PC-3 (cell line): ENCODE measurements at regions of chr19 and their contacts with region 1.

Region 1: DNA sequence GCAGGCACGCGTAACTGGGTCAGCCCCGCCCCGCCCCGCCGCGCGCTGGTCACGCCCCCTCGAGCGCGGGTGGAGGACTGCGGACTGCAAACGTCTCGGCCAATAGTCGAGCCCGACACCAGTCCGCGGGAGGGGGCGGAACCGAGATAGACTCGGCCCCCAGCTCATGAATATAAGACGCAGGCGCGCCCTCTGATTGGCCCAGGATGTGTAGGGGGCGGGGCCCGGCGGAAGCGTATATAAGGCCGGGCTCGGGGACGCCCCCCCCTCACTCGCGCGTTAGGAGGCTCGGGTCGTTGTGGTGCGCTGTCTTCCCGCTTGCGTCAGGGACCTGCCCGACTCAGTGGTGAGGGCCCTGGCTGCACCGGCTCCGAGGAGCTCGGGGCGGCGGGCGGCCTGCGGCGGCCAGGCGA is at the start of gene CIRBP:
- DNase-seq: peak; percentile 95
- ATAC-seq: peak; percentile 35
- H3K4me3 ChIP-seq: peak within 1 kb of the TSS; percentile 71
- H3K27ac ChIP-seq: peak within 1 kb of the TSS; percentile 94
- H3K4me1 ChIP-seq: peaks cover 70% of the 10 kb centered on the region
- H3K27me3 ChIP-seq: no peaks in the 10 kb centered on the region
- CTCF ChIP-seq: no peak
- total RNA-seq, gene CIRBP: 136 and 197 TPM in 2 replicates

Region 2: DNA sequence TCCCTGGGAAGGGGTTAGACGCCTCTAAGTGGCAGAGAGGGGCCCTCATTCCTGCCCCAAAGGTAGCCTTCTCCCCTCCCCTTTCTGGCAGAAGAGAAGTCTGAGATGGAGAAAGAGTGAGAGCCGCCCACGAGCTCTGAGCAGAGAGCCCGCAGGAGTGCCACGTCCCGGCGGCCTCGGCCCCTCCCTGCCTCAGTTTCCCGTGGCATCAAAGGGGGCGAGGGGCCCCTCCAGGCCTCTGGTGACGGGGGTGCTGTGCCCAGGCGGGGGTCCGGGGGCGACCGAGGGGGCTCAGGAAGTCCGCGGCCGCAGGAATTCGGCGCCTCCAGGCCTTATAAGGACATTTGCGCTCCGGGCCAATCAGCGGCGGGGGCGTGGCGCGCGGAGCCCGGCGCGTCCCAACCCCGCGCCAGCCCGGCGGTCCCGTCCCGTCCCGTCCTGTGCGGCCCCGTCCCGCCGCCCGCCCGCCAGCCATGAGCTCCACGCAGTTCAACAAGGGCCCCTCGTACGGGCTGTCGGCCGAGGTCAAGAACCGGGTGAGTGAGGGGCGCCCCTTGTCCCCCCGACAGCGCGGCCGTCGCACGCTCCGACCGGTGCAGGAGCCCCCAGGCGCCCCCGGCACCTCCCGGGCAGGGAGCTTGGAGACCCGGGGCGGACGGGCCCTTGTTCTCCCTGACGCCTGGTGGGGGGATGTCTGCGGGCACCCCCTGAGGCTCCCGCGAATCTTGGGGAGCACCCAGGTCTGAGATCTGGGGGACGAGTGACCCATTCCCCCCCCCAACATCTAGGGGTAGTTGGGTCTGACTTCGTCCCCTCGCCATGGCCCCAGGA is 242.7 kb before region 1 on chr19 and contains the start of gene CNN2:
- CTCF ChIA-PET with region 1: no interaction called
- POLR2A ChIA-PET with region 1: interaction called, 15 read pairs
- intact Hi-C with region 1: no loop called
- DNase-seq: peak; percentile 66
- ATAC-seq: peak; percentile 76
- H3K4me3 ChIP-seq: peak within 1 kb of the TSS; percentile 95
- H3K27ac ChIP-seq: no peak within 1 kb of the TSS
- H3K4me1 ChIP-seq: no peaks in the 10 kb centered on the region; the same call in 1 of the 2 replicates
- H3K27me3 ChIP-seq: no peaks in the 10 kb centered on the region
- CTCF ChIP-seq: no peak
- total RNA-seq, gene CNN2: 97.9 and 107 TPM in 2 replicates

Region 3: DNA sequence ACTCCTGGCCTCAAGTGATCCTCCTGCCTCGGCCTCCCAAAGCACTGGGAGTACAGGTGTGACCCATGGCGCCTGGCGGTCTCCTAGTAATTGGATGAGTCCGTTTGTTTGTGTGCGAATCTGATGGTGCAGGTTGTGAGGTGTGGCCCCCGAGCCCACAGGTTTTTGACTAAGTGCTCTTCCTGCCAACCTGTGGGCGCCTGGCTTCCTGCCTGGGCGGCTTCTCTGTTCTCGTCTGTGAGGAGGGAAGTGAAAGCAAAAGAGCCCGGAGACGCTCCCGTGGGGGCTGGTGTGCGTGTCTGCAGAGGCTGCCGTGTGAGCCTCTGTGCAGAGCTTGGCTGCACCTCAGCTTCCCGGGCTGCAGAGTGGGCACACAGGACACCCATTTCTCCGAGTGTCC is 192.1 kb before region 1 on chr19:
- CTCF ChIA-PET with region 1: no interaction called
- POLR2A ChIA-PET with region 1: interaction called, 24 read pairs
- intact Hi-C with region 1: no loop called
- DNase-seq: peak; percentile 77
- ATAC-seq: peak; percentile 48
- H3K4me3 ChIP-seq: peak overlapping the region; percentile 48; the same call in 1 of the 2 replicates
- H3K27ac ChIP-seq: no peak overlapping the region
- H3K4me1 ChIP-seq: no peaks in the 10 kb centered on the region; the same call in 1 of the 2 replicates
- H3K27me3 ChIP-seq: no peaks in the 10 kb centered on the region
- CTCF ChIP-seq: no peak

Region 4: DNA sequence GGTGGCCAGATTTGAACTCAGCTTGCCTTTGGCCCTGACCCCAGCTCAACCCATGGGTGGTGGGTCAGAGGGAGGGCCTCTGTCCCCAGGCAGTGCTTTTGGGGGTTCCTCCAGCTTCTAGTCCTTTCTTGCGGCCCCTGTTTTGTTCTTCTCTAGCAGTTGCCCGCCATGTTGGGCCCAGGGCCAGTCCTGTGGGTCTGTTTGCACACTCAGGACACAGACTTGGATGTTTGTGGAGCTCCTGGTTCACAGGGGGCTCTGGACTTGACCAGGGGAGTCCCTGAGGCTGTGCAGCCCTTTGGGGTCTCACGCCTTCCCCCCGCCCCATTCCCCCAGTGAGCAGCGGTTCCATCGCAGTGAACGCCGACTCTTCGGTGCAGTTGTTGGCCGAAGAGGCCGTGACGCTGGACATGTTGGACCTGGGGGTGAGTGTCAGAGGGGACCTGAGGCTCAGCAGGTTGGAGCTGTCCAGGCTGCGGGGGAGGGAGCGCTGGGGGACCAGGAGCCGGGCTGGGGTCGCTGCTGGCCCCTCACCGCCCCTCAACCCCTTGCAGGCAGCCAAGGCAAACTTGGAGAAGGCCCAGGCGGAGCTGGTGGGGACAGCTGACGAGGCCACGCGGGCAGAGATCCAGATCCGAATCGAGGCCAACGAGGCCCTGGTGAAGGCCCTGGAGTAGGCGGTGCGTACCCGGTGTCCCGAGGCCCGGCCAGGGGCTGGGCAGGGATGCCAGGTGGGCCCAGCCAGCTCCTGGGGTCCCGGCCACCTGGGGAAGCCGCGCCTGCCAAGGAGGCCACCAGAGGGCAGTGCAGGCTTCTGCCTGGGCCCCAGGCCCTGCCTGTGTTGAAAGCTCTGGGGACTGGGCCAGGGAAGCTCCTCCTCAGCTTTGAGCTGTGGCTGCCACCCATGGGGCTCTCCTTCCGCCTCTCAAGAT is 25.0 kb before region 1 on chr19:
- CTCF ChIA-PET with region 1: interaction called, 124 read pairs
- POLR2A ChIA-PET with region 1: interaction called, 6 read pairs
- intact Hi-C with region 1: loop called (anchors 1 kb)
- DNase-seq: peak; percentile 72
- ATAC-seq: peak; percentile 27
- H3K4me3 ChIP-seq: peak overlapping the region; percentile 86
- H3K27ac ChIP-seq: no peak overlapping the region
- H3K4me1 ChIP-seq: peaks cover 37% of the 10 kb centered on the region
- H3K27me3 ChIP-seq: no peaks in the 10 kb centered on the region
- CTCF ChIP-seq: peak; percentile 87

Region 5: GRCh38 chr19:1249298-1249989 is 19.6 kb before region 1 on chr19:
- CTCF ChIA-PET with region 1: interaction called, 124 read pairs
- POLR2A ChIA-PET with region 1: interaction called, 29 read pairs
- intact Hi-C with region 1: loop called (anchors 1 kb)
- DNase-seq: peak; percentile 88
- ATAC-seq: peak; percentile 14
- H3K4me3 ChIP-seq: peak overlapping the region; percentile 86
- H3K27ac ChIP-seq: peak overlapping the region; percentile 88
- H3K4me1 ChIP-seq: peaks cover 33% of the 10 kb centered on the region
- H3K27me3 ChIP-seq: no peaks in the 10 kb centered on the region
- CTCF ChIP-seq: no peak

Region 6: DNA sequence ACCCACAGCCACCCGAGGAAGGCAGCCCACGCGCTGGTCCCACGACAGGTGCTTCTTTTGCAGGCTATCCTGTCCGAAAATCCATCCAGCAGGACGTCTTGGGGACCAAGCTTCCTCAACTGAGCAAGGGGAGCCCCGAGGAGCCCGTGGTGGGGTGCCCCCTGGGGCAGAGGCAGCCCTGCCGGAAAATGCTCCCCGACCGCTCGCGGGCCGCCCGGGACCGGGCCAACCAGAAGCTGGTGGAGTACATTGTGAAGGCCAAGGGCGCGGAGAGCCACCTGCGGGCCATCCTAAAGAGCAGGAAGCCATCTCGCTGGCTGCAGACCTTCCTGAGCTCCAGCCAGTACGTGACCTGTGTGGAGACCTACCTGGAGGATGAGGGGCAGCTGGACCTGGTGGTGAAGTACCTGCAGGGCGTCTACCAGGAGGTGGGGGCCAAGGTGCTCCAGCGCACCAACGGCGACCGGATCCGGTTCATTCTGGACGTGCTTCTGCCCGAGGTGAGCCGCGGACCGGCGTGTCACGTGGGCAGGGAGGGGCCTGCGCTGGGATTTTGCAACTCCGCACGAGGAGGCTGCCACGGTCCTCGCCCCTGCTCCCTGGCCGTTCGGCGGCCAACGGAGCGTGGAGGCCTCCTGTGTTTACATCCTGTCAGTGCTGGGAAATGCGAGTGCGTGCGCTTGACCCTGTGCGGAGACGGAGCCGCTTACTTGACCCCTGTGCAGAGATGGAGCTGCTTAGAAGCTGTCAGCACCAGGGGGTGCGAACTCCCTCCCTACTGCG is 101.7 kb after region 1 on chr19:
- CTCF ChIA-PET with region 1: no interaction called
- POLR2A ChIA-PET with region 1: no interaction called
- intact Hi-C with region 1: no loop called
- DNase-seq: no peak
- ATAC-seq: no peak
- H3K4me3 ChIP-seq: no peak overlapping the region
- H3K27ac ChIP-seq: no peak overlapping the region
- H3K4me1 ChIP-seq: no peaks in the 10 kb centered on the region
- H3K27me3 ChIP-seq: no peaks in the 10 kb centered on the region
- CTCF ChIP-seq: no peak

Region 7: DNA sequence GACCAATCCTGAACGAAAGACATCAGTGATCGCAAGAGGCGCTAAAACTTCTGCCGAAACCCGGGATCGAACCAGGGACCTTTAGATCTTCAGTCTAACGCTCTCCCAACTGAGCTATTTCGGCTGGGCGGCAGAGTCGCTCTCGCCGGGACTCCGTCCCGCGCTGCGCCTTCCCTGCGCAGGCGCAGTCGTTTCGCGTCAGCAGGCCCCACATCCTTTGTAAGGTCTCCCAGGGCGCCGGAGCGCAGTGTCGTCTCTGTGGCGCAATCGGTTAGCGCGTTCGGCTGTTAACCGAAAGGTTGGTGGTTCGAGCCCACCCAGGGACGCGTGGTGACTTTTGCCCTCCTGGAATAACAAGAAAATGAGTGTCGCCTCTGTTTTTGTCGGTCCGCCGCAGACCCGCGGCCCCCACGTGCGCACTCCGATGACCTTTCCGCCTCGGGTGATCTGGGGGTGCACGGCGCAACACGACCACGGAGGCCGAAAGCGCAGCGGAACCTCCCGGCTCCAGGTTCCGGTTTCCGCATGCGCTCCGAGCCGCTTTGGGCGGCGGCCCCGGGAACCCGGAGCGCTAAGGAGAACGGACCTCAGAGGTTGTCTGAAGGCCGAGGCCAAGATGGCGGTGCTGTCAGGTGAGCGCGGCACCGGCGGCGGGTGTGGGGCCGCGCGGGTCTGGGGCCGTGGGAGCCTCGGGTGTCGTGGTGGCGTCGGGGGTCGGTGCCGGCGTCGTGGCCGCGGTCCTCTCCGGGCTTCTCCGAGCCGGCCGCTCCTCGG is 114.4 kb after region 1 on chr19 and contains the start of gene NDUFS7:
- CTCF ChIA-PET with region 1: no interaction called
- POLR2A ChIA-PET with region 1: interaction called, 12 read pairs
- intact Hi-C with region 1: no loop called
- DNase-seq: peak; percentile 83
- ATAC-seq: peak; percentile 79
- H3K4me3 ChIP-seq: peak within 1 kb of the TSS; percentile 99
- H3K27ac ChIP-seq: peak within 1 kb of the TSS; percentile 51
- H3K4me1 ChIP-seq: no peaks in the 10 kb centered on the region
- H3K27me3 ChIP-seq: no peaks in the 10 kb centered on the region
- CTCF ChIP-seq: no peak; the same call in 1 of the 2 replicates
- total RNA-seq, gene NDUFS7: 102 and 111 TPM in 2 replicates